GM12878 (cell line): ENCODE measurements at regions of chr10 and their contacts with region 1.

Region 1: GRCh38 chr10:100998991-100999741 is 442 bp upstream of the LZTS2 start:
- DNase-seq: no peak
- ATAC-seq: peak; percentile 75
- H3K4me3 ChIP-seq: peak overlapping the region; percentile 86
- H3K27ac ChIP-seq: peak overlapping the region; percentile 88
- H3K4me1 ChIP-seq: peaks cover 17% of the 10 kb centered on the region
- H3K27me3 ChIP-seq: no peaks in the 10 kb centered on the region
- CTCF ChIP-seq: peak; percentile 79 to 87 (median 81)
- EP300 ChIP-seq: no peak
- POLR2A ChIP-seq: peak; percentile 77
- RAD21 ChIP-seq: no peak

Region 2: DNA sequence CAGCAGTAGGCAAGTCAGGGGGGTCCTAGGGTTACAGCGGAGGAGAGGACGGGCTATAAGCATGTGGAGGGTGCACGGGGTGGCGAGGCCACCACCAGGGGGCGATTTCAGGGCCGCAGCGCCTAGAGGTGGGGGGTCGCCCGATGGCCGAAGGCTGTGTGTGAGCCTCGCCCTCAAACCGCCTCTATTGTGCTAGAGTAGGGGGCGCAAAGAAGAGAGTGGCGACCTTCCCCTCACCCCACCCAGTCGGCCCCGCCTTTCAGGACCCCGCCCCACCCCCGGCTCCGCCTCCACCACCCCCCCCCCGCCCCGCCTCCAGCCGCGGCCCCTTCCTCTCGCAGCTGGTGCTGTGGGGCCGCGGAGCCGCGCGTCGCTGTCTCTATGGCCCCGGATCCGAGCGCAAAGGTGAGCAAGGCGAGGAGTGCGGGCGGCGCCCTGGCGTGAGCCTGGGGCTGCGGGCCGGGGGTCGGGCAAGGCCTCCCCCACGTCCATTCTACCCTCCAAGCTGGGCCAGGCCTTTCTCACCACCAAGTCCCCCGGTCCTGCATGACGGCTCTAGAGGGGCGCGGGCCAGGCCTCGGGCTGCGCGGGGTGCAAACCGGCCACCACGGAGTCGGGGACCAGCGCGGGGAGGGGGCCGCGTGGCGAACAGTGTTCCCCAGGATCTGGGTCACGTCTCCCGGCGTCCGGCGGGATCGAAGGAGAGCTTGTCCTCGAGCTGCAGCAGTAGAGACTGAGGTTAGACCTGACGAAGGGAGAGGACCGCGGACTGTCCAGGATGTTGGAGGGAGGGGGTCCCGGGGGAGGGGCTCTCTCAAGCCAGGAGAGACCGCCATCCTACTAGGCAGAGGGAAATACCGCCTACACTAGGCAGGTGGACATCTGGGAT is 29.7 kb before region 1 on chr10 and contains the start of gene SEMA4G:
- CTCF ChIA-PET with region 1: interaction called, 29 read pairs
- POLR2A ChIA-PET with region 1: interaction called, 3 read pairs
- RAD21 ChIA-PET with region 1: no interaction called
- SMC1A ChIA-PET with region 1: no interaction called
- in situ Hi-C with region 1: no loop called
- intact Hi-C with region 1: no loop called
- DNase-seq: no peak
- ATAC-seq: peak; percentile 94
- H3K4me3 ChIP-seq: peak within 1 kb of the TSS; percentile 50; the same call in 1 of the 2 replicates
- H3K27ac ChIP-seq: no peak within 1 kb of the TSS
- H3K4me1 ChIP-seq: peaks cover 3% of the 10 kb centered on the region; the same call in 1 of the 2 replicates
- H3K27me3 ChIP-seq: no peaks in the 10 kb centered on the region
- CTCF ChIP-seq: peak; percentile 54 to 82 (median 64)
- EP300 ChIP-seq: no peak
- POLR2A ChIP-seq: peak; percentile 26; the same call in 1 of the 2 replicates
- RAD21 ChIP-seq: no peak
- polyA plus RNA-seq, gene SEMA4G: not detected

Region 3: GRCh38 chr10:101012525-101013364 is 13.6 kb after region 1 on chr10:
- CTCF ChIA-PET with region 1: interaction called, 91 read pairs
- POLR2A ChIA-PET with region 1: interaction called, 11 read pairs
- RAD21 ChIA-PET with region 1: interaction called, 26 read pairs
- SMC1A ChIA-PET with region 1: interaction called, 9 read pairs
- in situ Hi-C with region 1: no loop called
- intact Hi-C with region 1: loop called (anchors 1 kb)
- DNase-seq: peak; percentile 61
- ATAC-seq: peak; percentile 91
- H3K4me3 ChIP-seq: no peak overlapping the region
- H3K27ac ChIP-seq: no peak overlapping the region
- H3K4me1 ChIP-seq: peaks cover 3% of the 10 kb centered on the region; the same call in 1 of the 2 replicates
- H3K27me3 ChIP-seq: peaks cover 3 to 8% of the 10 kb centered on the region in 2 experiments
- CTCF ChIP-seq: peak; percentile 82 to 96 (median 92); a peak in 5 of 6 replicates
- EP300 ChIP-seq: no peak
- POLR2A ChIP-seq: no peak
- RAD21 ChIP-seq: peak; percentile 65

Region 4: DNA sequence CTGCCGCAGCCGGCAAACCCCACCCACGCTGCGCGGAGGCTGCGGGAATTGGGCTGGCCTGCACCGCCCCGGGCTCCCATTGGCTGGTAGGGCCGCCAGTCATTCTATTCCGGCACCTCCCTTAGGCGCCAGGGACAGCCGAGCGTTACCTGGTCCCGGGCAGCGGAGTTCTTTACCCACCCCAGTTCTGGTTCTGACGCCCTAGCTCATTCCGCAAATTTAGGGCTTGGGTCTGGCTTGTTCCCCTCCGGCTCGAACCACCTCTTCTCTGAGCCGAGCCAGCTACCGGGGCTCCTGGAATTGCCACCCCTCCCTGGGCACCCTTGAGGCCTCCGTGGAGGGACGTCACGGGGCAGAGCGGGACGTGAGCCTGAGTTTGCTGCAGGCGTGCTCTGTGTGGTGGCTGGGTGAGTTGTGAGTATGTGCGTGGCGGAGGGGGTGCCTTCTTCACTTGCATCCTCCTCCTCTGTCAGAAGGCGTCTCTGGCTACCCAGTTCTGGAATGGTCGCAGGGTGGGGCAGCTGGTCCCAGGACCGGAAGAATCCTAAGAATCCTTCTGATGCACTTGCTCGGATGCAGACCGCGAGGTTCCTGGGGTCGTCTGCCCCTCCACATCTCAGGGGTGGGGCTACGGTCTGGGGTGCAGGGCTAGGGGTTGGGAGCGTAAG is 32.1 kb after region 1 on chr10 and contains the starts of genes PDZD7 and SFXN3:
- CTCF ChIA-PET with region 1: interaction called, 11 read pairs
- POLR2A ChIA-PET with region 1: interaction called, 4 read pairs
- RAD21 ChIA-PET with region 1: interaction called, 3 read pairs
- SMC1A ChIA-PET with region 1: no interaction called
- in situ Hi-C with region 1: no loop called
- intact Hi-C with region 1: no loop called
- DNase-seq: peak; percentile 48
- ATAC-seq: peak; percentile 96
- H3K4me3 ChIP-seq: peak within 1 kb of the TSS; percentile 64
- H3K27ac ChIP-seq: no peak within 1 kb of the TSS
- H3K4me1 ChIP-seq: peaks cover 21% of the 10 kb centered on the region
- H3K27me3 ChIP-seq: peaks cover 5 to 9% of the 10 kb centered on the region in 2 experiments
- CTCF ChIP-seq: no peak
- EP300 ChIP-seq: no peak
- POLR2A ChIP-seq: no peak
- RAD21 ChIP-seq: no peak
- polyA plus RNA-seq, gene PDZD7: not detected
- polyA plus RNA-seq, gene SFXN3: 0.05 to 0.44 TPM

Region 5: GRCh38 chr10:101060036-101060950 is 61.1 kb after region 1 on chr10:
- CTCF ChIA-PET with region 1: interaction called, 4 read pairs
- POLR2A ChIA-PET with region 1: interaction called, 4 read pairs
- RAD21 ChIA-PET with region 1: interaction called, 4 read pairs
- SMC1A ChIA-PET with region 1: no interaction called
- in situ Hi-C with region 1: no loop called
- intact Hi-C with region 1: loop called (anchors 1 kb)
- DNase-seq: peak; percentile 81
- ATAC-seq: peak; percentile 54
- H3K4me3 ChIP-seq: peak overlapping the region; percentile 95
- H3K27ac ChIP-seq: peak overlapping the region; percentile 98
- H3K4me1 ChIP-seq: peaks cover 31% of the 10 kb centered on the region
- H3K27me3 ChIP-seq: peaks cover 0 to 3% of the 10 kb centered on the region in 2 experiments; a peak in 1 of 4 replicates
- CTCF ChIP-seq: peak; percentile 87 to 92 (median 92)
- EP300 ChIP-seq: no peak
- POLR2A ChIP-seq: no peak; the same call in 1 of the 2 replicates
- RAD21 ChIP-seq: peak; percentile 83

Region 6: DNA sequence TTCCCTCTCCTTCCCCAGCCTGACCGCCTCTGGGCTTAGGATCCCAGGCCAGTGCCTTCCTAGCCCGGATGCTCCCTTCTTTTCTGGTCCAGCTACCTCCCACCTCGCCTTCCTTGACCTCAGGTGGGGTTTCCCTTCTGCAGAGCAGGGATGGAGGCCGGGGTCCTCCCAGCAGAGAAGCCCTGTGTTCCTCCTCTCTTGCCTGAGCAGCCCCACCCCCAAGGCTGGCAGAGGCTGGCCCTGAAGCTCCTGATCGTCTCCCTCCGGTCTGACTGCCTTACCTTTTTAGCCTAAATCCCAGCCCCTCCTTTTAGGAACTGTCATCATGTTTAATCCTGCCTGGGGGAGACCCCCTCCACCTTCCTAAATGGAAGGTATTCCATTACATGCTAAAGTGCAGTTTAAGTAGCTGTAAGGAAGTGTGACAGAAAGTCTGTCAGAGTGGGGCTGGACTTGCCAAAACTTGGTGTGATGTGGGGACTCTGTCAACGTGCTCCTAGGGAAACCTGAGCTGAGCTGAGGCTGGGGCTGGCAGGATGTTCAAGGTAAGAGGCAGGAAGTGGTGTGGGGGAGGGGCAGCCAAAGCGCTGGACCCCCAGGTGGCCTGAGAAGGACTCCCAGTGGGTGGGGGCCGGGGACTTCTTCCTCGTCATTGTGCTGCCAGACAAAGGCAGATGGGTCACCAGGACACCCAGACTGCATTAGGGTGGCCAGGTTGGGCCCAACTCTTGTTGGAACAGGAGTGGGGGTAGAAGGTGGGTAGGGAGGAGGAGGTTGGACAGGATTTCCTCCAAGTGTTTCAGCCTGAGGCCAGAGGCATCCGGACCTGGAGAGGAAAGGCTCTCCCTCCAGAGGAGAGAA is 190.6 kb after region 1 on chr10:
- CTCF ChIA-PET with region 1: no interaction called
- POLR2A ChIA-PET with region 1: no interaction called
- RAD21 ChIA-PET with region 1: no interaction called
- SMC1A ChIA-PET with region 1: no interaction called
- in situ Hi-C with region 1: no loop called
- intact Hi-C with region 1: no loop called
- DNase-seq: no peak
- ATAC-seq: no peak
- H3K4me3 ChIP-seq: no peak overlapping the region
- H3K27ac ChIP-seq: no peak overlapping the region
- H3K4me1 ChIP-seq: no peaks in the 10 kb centered on the region
- H3K27me3 ChIP-seq: no peaks in the 10 kb centered on the region
- CTCF ChIP-seq: no peak
- EP300 ChIP-seq: no peak
- POLR2A ChIP-seq: no peak
- RAD21 ChIP-seq: no peak